ENCODE measurements at regions of chr5 and their contacts with region 1.

Region 1: DNA sequence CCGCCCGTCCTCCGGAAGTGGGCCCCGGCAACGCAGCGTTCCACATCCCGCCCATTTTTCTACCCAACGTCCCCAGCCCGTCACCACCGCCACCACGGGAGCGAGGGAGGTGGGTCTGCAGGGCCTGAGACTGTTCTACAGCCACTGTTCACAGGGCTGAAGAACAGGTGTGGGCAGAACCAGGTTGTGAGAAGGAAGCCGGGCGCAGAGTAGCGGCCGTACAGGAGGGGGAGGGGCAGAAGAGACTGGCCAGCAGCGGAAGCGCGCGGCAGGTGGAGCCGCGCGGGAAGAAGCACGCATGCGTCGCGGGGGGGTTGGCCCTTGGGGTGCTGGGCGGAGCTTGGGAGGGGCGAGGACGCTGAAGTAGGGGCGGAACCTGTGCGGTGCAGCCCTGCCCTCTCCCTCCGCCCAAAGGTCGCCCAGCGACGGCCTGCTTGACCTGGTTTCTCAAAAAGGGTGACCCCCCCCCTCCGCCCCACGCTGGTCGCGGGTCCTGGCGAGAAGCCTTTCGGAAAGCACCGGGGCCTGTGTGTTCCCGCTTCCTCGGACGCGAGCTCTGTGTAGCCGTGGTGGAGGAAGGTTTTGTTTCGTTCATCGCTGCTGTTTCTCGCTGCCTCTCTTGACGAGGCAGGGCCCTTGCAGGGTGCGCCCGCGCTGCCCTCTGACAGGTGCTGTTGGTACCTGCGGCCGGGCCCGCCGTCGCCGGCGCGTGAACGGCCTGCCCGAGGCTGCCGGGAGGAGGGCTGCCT is 7.8 kb upstream of the MGAT1 start:
- DNase-seq: peak; percentile 88 to 100 (median 96)
- ATAC-seq: peak; percentile 72 to 74
- H3K4me3 Mint-ChIP-seq: peak overlapping the region; percentile 83 to 99 (median 92)
- H3K27ac Mint-ChIP-seq: peak overlapping the region; percentile 93 to 100 (median 100)
- H3K4me1 Mint-ChIP-seq: peaks cover 47 to 84% (median 75%) of the 10 kb centered on the region in 4 donors
- H3K27me3 Mint-ChIP-seq: no peaks in the 10 kb centered on the region

Region 2: GRCh38 chr5:180494060-180494509 is 316.3 kb before region 1 on chr5 and contains the start of gene CNOT6:
- POLR2A ChIA-PET with region 1: interaction called, 10 read pairs
- DNase-seq: peak; percentile 89 to 97 (median 95)
- ATAC-seq: peak; percentile 86 to 88
- H3K4me3 Mint-ChIP-seq: peak within 1 kb of the TSS; percentile 88 to 99 (median 93)
- H3K27ac Mint-ChIP-seq: peak within 1 kb of the TSS; percentile 91 to 98 (median 95)
- H3K4me1 Mint-ChIP-seq: peaks cover 23 to 51% (median 38%) of the 10 kb centered on the region in 4 donors
- H3K27me3 Mint-ChIP-seq: no peaks in the 10 kb centered on the region
- polyA plus RNA-seq, gene CNOT6: 6.0 to 11.1 (median 10.3) TPM

Region 3: DNA sequence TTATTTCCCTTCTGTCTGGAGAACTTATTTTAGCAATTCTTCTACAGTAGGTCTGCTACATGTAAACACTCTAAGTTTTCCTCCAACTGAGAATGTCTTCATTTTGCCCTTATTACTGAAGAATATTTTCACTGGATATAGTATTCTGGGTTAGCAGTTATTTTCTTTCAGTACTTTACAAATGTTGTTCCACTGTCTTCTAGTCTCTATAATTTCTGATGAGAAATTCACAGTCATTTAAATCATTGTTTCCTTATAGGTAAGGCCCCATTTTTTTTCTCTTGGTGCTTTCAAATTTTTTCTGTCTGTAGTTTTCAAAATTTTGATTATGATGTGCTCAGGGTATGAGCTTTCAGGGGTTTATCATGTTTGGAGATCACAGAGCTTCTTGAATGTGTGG is 38.5 kb before region 1 on chr5:
- POLR2A ChIA-PET with region 1: no interaction called
- DNase-seq: no peak
- ATAC-seq: no peak
- H3K4me3 Mint-ChIP-seq: no peak overlapping the region
- H3K27ac Mint-ChIP-seq: no peak overlapping the region
- H3K4me1 Mint-ChIP-seq: no peaks in the 10 kb centered on the region
- H3K27me3 Mint-ChIP-seq: peaks cover 2 to 25% (median 10%) of the 10 kb centered on the region in 5 donors

Region 4: GRCh38 chr5:180784497-180785097 is 25.8 kb before region 1 on chr5:
- POLR2A ChIA-PET with region 1: interaction called, 11 read pairs
- DNase-seq: peak; percentile 48 to 91 (median 70)
- ATAC-seq: peak; percentile 78 to 91
- H3K4me3 Mint-ChIP-seq: no peak overlapping the region
- H3K27ac Mint-ChIP-seq: peak overlapping the region; percentile 8 to 87 (median 47)
- H3K4me1 Mint-ChIP-seq: peaks cover 23 to 57% (median 44%) of the 10 kb centered on the region in 4 donors
- H3K27me3 Mint-ChIP-seq: no peaks in the 10 kb centered on the region

Region 5: GRCh38 chr5:180825768-180826525 is 15.6 kb after region 1 on chr5:
- POLR2A ChIA-PET with region 1: interaction called, 642 read pairs
- DNase-seq: no peak
- ATAC-seq: no peak
- H3K4me3 Mint-ChIP-seq: peak overlapping the region in 1 of 10 donors; percentile 33
- H3K27ac Mint-ChIP-seq: peak overlapping the region in 5 of 10 donors; percentile 15 to 53 (median 46)
- H3K4me1 Mint-ChIP-seq: peaks cover 21 to 52% (median 44%) of the 10 kb centered on the region in 4 donors
- H3K27me3 Mint-ChIP-seq: no peaks in the 10 kb centered on the region

Measured in naive thymus-derived CD8-positive, alpha-beta T cell (primary cell).